Psoas muscle (tissue), 8 donors: ENCODE measurements at regions of chr12 and their contacts with region 1.

Region 1: GRCh38 chr12:32586390-32586789 is 92.7 kb upstream of the DNM1L start:
- DNase-seq: no peak
- ATAC-seq: no peak
- H3K4me3 ChIP-seq: no peak overlapping the region
- H3K27ac ChIP-seq: peak overlapping the region; percentile 9
- H3K4me1 ChIP-seq: peaks cover 9% of the 10 kb centered on the region
- H3K27me3 ChIP-seq: no peaks in the 10 kb centered on the region
- CTCF ChIP-seq: no peak

Region 2: DNA sequence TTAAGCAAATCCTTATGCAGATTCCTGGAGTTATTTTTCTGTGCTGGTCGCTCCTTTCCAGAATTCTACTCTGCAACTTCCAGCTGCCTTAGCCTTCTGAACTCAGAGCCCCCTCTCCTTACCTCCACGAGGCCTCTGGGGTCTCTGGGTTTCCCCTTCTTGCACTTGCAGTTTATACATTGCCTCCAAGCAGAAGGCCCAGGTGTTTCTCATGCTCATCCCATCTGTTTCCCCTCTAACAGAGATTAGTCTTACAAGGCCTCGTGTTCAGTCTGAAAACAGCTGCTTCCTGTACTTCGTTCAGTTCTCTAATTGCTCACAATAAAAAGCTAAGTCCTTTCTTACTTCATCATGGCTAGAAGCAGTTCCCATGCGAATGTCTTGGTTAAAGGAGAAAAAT is 321.4 kb before region 1 on chr12:
- intact Hi-C with region 1: loop called in 1 of 2 experiments (anchors 5 kb)
- DNase-seq: no peak
- ATAC-seq: no peak
- H3K4me3 ChIP-seq: no peak overlapping the region
- H3K27ac ChIP-seq: no peak overlapping the region
- H3K4me1 ChIP-seq: no peaks in the 10 kb centered on the region
- H3K27me3 ChIP-seq: no peaks in the 10 kb centered on the region
- CTCF ChIP-seq: no peak

Region 3: DNA sequence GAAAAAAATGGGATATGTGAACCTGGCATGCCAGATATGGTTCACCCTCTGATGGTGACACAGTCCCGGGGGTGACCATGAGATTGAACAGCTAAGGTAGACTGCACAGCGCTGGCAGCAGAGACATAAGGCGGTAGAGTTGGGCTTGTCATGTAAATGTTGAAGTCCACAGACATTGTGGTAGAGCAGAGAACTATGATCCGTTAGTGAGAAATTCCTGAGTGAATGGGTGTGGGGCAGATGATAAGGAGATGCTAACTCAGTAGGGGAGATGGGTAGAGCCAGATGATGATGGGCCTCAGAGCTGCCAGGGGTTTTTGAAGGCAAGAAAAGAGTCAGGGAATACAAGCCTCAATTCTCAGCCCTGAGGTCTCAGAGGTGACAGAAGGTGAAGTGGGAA is 41.6 kb after region 1 on chr12:
- intact Hi-C with region 1: loop called in 1 of 2 experiments (anchors 5 kb)
- DNase-seq: no peak
- ATAC-seq: no peak
- H3K4me3 ChIP-seq: no peak overlapping the region
- H3K27ac ChIP-seq: no peak overlapping the region
- H3K4me1 ChIP-seq: no peaks in the 10 kb centered on the region
- H3K27me3 ChIP-seq: no peaks in the 10 kb centered on the region
- CTCF ChIP-seq: no peak

Region 4: DNA sequence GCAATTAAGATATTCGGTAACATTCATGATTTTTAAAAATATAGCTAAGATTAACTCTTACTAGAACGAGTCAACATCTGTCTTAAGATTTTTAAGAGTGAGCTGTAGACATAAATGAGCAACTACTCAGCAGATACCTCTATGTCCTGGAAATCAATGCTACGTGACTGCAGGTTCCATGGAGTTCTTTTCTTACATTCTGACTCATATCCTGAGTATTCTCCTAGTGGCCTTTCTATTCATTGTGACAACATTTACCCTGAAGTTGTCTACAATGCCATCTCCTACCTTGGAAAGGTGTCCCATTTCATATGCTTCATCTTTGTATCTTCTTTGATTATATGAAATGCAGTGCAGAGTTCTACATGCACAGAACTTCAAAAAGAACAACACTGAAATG is 250.3 kb after region 1 on chr12:
- intact Hi-C with region 1: no loop called
- DNase-seq: no peak
- ATAC-seq: peak in 1 of 4 donors; percentile 37
- H3K4me3 ChIP-seq: no peak overlapping the region
- H3K27ac ChIP-seq: no peak overlapping the region
- H3K4me1 ChIP-seq: peaks cover 7% of the 10 kb centered on the region
- H3K27me3 ChIP-seq: no peaks in the 10 kb centered on the region
- CTCF ChIP-seq: no peak